T-cell (primary cell): ENCODE measurements at regions of chr4 and their contacts with region 1.

Region 1: GRCh38 chr4:80072744-80073472 is at the start of gene ANTXR2:
- DNase-seq: peak in 34 of 35 experiments; percentile 32 to 76 (median 48)
- ATAC-seq: peak; percentile 75 to 84 (median 80)
- H3K4me3 ChIP-seq: peak within 1 kb of the TSS; percentile 89 to 92
- H3K4me3 Mint-ChIP-seq: peak within 1 kb of the TSS; percentile 95 to 98 (median 96)
- H3K27ac ChIP-seq: peak within 1 kb of the TSS; percentile 93
- H3K27ac Mint-ChIP-seq: peak within 1 kb of the TSS; percentile 91 to 95
- H3K4me1 ChIP-seq: peaks cover 14 to 16% of the 10 kb centered on the region in 2 experiments
- H3K4me1 Mint-ChIP-seq: peaks cover 59 to 75% (median 68%) of the 10 kb centered on the region in 3 donors
- H3K27me3 ChIP-seq: peaks cover 0 to 5% of the 10 kb centered on the region in 2 experiments
- H3K27me3 Mint-ChIP-seq: no peaks in the 10 kb centered on the region
- total RNA-seq, gene ANTXR2: 45.1 to 64.3 (median 48.2) TPM

Region 2: GRCh38 chr4:80058740-80059139 is 14.2 kb before region 1 on chr4:
- CTCF ChIA-PET with region 1: interaction called in 1 of 2 experiments, 12 read pairs
- POLR2A ChIA-PET with region 1: interaction called, 15 to 21 read pairs
- DNase-seq: peak in 30 of 35 experiments; percentile 10 to 88 (median 44)
- ATAC-seq: peak; percentile 85 to 94 (median 88)
- H3K4me3 ChIP-seq: peak overlapping the region in 1 of 2 donors; percentile 14
- H3K4me3 Mint-ChIP-seq: peak overlapping the region; percentile 68 to 75 (median 69)
- H3K27ac ChIP-seq: peak overlapping the region; percentile 95
- H3K27ac Mint-ChIP-seq: peak overlapping the region; percentile 95 to 96
- H3K4me1 ChIP-seq: peaks cover 12 to 13% of the 10 kb centered on the region in 2 experiments
- H3K4me1 Mint-ChIP-seq: peaks cover 32 to 66% (median 46%) of the 10 kb centered on the region in 3 donors
- H3K27me3 ChIP-seq: no peaks in the 10 kb centered on the region
- H3K27me3 Mint-ChIP-seq: no peaks in the 10 kb centered on the region